Activated naive CD4-positive, alpha-beta T cell treated with anti-CD3 and anti-CD28 coated beads, Interleukin-2, amount 10 ng/mL, durations not matched to agents 7 days and 5 days (primary cell): ENCODE measurements at regions of chr5 and their contacts with region 1.

Region 1: DNA sequence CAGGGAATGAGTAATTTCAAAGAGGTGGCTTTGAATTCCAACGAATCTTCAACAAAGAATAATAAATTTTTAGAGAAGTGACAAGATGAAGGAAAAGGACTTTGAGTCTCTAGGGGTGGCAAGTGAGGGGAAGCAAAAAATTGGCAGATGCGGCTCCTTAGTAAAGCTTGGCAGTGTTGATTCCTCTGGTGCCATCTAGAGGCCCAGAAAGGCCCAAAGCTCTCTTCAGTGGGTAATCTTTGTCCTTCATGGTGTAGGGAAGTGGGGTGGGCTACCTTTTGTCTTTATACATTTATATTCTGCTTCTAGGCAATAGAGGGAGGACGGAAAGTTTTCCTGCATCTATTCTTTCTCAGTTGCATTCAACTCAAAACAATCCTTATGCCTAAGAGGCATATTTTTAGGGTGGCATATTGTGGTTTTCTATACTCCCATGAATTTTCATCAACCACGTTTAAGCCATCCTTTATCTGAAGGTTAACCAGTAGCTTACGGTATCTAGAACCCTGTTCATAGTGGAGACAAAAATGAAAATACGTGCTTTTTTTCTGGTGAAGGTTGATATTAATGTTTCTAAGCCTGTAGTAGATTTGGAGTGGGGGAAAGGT is 17.5 kb upstream of the ROPN1L start:
- DNase-seq: peak; percentile 43
- H3K4me3 Mint-ChIP-seq: no peak overlapping the region
- H3K27ac Mint-ChIP-seq: no peak overlapping the region
- H3K4me1 Mint-ChIP-seq: peaks cover 37% of the 10 kb centered on the region
- H3K27me3 Mint-ChIP-seq: no peaks in the 10 kb centered on the region

Region 2: GRCh38 chr5:10283927-10284635 is 140.1 kb before region 1 on chr5:
- CTCF ChIA-PET with region 1: interaction called, 33 read pairs
- DNase-seq: peak; percentile 81
- H3K4me3 Mint-ChIP-seq: no peak overlapping the region
- H3K27ac Mint-ChIP-seq: no peak overlapping the region
- H3K4me1 Mint-ChIP-seq: peaks cover 14% of the 10 kb centered on the region
- H3K27me3 Mint-ChIP-seq: peaks cover 10% of the 10 kb centered on the region

Region 3: GRCh38 chr5:10358999-10359398 is 65.2 kb before region 1 on chr5:
- CTCF ChIA-PET with region 1: interaction called, 17 read pairs
- DNase-seq: no peak
- H3K4me3 Mint-ChIP-seq: no peak overlapping the region
- H3K27ac Mint-ChIP-seq: no peak overlapping the region
- H3K4me1 Mint-ChIP-seq: peaks cover 41% of the 10 kb centered on the region
- H3K27me3 Mint-ChIP-seq: no peaks in the 10 kb centered on the region

Region 4: GRCh38 chr5:10528056-10528816 is 104.0 kb after region 1 on chr5:
- CTCF ChIA-PET with region 1: no interaction called
- DNase-seq: no peak
- H3K4me3 Mint-ChIP-seq: no peak overlapping the region
- H3K27ac Mint-ChIP-seq: no peak overlapping the region
- H3K4me1 Mint-ChIP-seq: peaks cover 2% of the 10 kb centered on the region
- H3K27me3 Mint-ChIP-seq: peaks cover 16% of the 10 kb centered on the region

Region 5: GRCh38 chr5:10863763-10864383 is 439.6 kb after region 1 on chr5:
- CTCF ChIA-PET with region 1: no interaction called
- DNase-seq: peak; percentile 70
- H3K4me3 Mint-ChIP-seq: no peak overlapping the region
- H3K27ac Mint-ChIP-seq: no peak overlapping the region
- H3K4me1 Mint-ChIP-seq: no peaks in the 10 kb centered on the region
- H3K27me3 Mint-ChIP-seq: peaks cover 4% of the 10 kb centered on the region